ENCODE measurements at regions of chr14 and their contacts with region 1.

Region 1: GRCh38 chr14:64147126-64147790 is 146.9 kb downstream of the ESR2 start:
- DNase-seq: no peak
- ATAC-seq: peak in 2 of 4 donors; percentile 24 to 29
- H3K4me3 ChIP-seq: no peak overlapping the region
- H3K27ac ChIP-seq: no peak overlapping the region
- H3K4me1 ChIP-seq: peaks cover 0 to 8% (median 0%) of the 10 kb centered on the region in 12 donors
- H3K27me3 ChIP-seq: no peaks in the 10 kb centered on the region
- CTCF ChIP-seq: no peak
- POLR2A ChIP-seq: no peak

Region 2: DNA sequence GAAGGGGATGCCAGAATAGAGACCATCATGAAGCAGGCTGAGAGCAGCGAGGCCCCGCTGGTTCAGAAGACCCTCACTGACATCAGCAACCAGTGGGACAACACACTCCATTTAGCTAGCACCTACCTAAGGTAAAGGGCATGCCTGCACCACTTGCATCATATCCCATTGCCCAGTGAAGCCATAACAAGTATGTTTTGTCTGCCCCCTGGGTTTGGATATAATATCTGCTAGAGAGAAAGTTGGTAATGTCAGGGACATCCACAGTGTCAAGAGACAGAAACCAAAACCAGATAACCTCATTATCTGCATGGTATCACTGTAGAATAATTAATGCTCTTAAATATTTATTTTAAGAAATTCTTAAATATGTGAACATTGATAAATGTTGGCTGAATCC is 120.7 kb before region 1 on chr14:
- intact Hi-C with region 1: loop called in 1 of 10 experiments (anchors 10 kb)
- DNase-seq: no peak
- ATAC-seq: no peak
- H3K4me3 ChIP-seq: no peak overlapping the region
- H3K27ac ChIP-seq: no peak overlapping the region
- H3K4me1 ChIP-seq: no peaks in the 10 kb centered on the region
- H3K27me3 ChIP-seq: no peaks in the 10 kb centered on the region
- CTCF ChIP-seq: no peak
- POLR2A ChIP-seq: no peak

Region 3: DNA sequence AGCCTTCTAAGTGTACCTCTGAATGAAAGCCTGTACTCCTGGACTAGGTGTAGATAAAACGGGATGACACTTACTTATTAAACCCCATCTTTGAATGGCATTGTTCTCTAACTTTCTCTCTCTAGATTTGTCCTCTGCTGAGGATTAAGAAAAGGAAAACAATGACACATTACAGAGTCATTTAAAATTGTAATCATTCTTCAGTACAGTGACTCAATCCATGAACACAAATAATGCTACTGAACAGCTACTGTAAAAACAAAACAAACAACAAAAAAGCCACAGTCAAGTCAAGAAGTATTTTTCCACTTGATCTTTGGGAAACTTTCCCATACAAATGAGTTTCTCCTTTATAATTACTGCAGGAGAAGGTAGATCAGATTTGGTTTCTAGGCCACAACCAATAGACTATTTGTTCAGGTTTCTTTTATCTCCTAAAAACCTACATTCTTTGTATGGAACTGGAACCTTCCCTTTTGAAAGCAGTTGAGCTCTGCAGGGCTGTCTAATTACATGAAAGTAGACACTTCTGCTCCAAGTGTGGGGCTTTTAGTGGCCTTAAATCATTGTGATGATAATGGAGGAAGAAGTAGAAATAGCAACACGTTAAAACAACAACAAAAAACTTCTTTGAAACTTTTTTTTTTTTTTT is 72.2 kb before region 1 on chr14:
- intact Hi-C with region 1: no loop called
- DNase-seq: no peak
- ATAC-seq: no peak
- H3K4me3 ChIP-seq: no peak overlapping the region
- H3K27ac ChIP-seq: no peak overlapping the region
- H3K4me1 ChIP-seq: no peaks in the 10 kb centered on the region
- H3K27me3 ChIP-seq: no peaks in the 10 kb centered on the region
- CTCF ChIP-seq: no peak
- POLR2A ChIP-seq: no peak

Region 4: GRCh38 chr14:64114166-64114565 is 33.1 kb before region 1 on chr14:
- intact Hi-C with region 1: no loop called
- DNase-seq: no peak
- ATAC-seq: peak in 3 of 4 donors; percentile 2 to 35 (median 10)
- H3K4me3 ChIP-seq: no peak overlapping the region
- H3K27ac ChIP-seq: peak overlapping the region in 6 of 12 donors; percentile 14 to 60 (median 38)
- H3K4me1 ChIP-seq: peaks cover 0 to 11% (median 4%) of the 10 kb centered on the region in 12 donors
- H3K27me3 ChIP-seq: no peaks in the 10 kb centered on the region
- CTCF ChIP-seq: no peak
- POLR2A ChIP-seq: no peak

Region 5: GRCh38 chr14:64510825-64511671 is 363.8 kb after region 1 on chr14:
- intact Hi-C with region 1: no loop called
- DNase-seq: peak in 4 of 5 donors; percentile 40 to 71 (median 58)
- ATAC-seq: peak; percentile 18 to 75 (median 55)
- H3K4me3 ChIP-seq: peak overlapping the region in 1 of 12 donors; percentile 7
- H3K27ac ChIP-seq: peak overlapping the region in 2 of 12 donors; percentile 15 to 86
- H3K4me1 ChIP-seq: peaks cover 3 to 84% (median 55%) of the 10 kb centered on the region in 12 donors
- H3K27me3 ChIP-seq: no peaks in the 10 kb centered on the region
- CTCF ChIP-seq: peak; percentile 88 to 93 (median 91)
- POLR2A ChIP-seq: no peak

Measured in heart left ventricle (tissue), 16 donors.